ENCODE measurements at regions of chr2 and their contacts with region 1.

Region 1: DNA sequence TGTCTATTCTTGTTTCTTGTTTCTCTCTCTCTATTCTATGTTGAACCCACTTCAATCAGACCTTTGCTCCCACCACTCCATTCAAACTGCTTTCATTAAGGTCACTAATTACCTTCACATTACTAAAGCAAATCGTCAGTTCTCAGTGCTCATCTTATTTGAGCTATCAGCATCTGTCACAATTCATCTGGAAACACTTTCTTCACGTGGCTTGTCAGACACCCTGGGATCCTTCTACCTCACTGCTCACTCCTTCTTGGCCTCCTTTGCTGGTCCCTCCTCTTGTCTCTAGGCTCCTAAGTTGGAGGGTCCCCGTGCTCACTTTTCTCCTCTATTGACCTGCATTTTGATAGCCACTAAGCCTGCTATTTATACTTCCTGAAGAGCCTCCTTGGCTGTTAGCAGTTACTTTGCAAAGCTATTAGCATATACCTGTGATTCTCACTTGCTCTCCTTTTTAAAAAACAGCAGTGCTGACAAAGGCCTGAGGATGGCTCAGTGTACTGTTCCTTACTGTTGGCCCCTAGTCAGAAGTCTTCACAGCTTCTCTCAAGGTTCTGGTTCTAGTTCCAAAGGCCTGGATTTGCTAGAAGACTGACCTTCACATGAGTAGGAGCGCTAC is 80.2 kb downstream of the PLEKHM3 start:
- DNase-seq: no peak
- ATAC-seq: no peak
- H3K4me3 ChIP-seq: no peak overlapping the region
- H3K27ac ChIP-seq: no peak overlapping the region
- H3K4me1 ChIP-seq: no peaks in the 10 kb centered on the region
- H3K27me3 ChIP-seq: no peaks in the 10 kb centered on the region
- CTCF ChIP-seq: no peak

Region 2: DNA sequence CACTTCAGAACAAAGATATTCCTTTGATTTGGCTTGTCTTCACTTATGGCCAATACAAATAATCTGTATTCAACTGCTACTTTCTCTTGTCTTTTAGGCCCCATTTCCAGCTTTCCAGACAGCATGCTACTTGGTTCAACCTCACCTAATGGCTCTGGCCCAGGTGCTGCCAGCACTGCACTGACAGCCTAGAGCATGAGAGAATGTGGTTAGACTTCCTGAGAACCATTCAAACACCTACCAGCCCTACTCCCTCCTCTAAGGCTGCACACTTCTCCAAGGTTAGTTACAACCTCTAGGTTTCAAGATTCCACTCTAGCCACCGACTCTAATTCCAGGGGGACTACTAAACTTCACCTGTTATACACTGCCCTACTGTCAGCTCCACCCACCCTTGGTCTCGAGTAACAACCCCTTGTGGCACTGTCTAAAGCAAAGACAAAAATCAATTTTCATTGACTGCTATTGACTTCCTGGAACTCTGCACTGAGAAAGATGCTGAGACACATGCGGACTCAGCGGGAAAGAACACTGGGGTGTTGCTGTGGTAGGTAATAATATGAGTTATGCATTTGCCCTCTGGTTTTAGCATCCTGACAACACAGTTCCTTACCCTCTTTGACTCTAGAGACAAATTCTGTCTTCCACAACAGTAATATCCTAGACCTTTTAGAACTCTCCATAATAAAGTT is 42.1 kb after region 1 on chr2:
- intact Hi-C with region 1: loop called in 1 of 2 experiments (anchors 5 kb)
- DNase-seq: no peak
- ATAC-seq: no peak
- H3K4me3 ChIP-seq: no peak overlapping the region
- H3K27ac ChIP-seq: no peak overlapping the region
- H3K4me1 ChIP-seq: peaks cover 9% of the 10 kb centered on the region
- H3K27me3 ChIP-seq: no peaks in the 10 kb centered on the region
- CTCF ChIP-seq: no peak

Measured in psoas muscle (tissue), 8 donors.